ENCODE measurements at regions of chr12 and their contacts with region 1.

Region 1: GRCh38 chr12:108514973-108515814 is at the start of gene FICD:
- DNase-seq: peak; percentile 98
- ATAC-seq: peak; percentile 95
- H3K4me3 ChIP-seq: peak within 1 kb of the TSS; percentile 40 to 97 (median 93)
- H3K4me3 Mint-ChIP-seq: peak within 1 kb of the TSS; percentile 96
- H3K27ac ChIP-seq: peak within 1 kb of the TSS; percentile 58 to 81
- H3K27ac Mint-ChIP-seq: peak within 1 kb of the TSS; percentile 87
- H3K4me1 ChIP-seq: peaks cover 13 to 30% of the 10 kb centered on the region in 2 donors
- H3K4me1 Mint-ChIP-seq: peaks cover 37% of the 10 kb centered on the region
- H3K27me3 ChIP-seq: no peaks in the 10 kb centered on the region
- H3K27me3 Mint-ChIP-seq: no peaks in the 10 kb centered on the region
- CTCF ChIP-seq: no peak
- total RNA-seq, gene FICD: 9.1 and 9.7 TPM in 2 replicates

Region 2: GRCh38 chr12:107760809-107761501 is 754.2 kb before region 1 on chr12 and contains the start of gene PRDM4:
- CTCF ChIA-PET with region 1: no interaction called
- POLR2A ChIA-PET with region 1: no interaction called
- intact Hi-C with region 1: loop called (anchors 1 kb)
- DNase-seq: peak; percentile 97
- ATAC-seq: peak; percentile 92
- H3K4me3 ChIP-seq: peak within 1 kb of the TSS; percentile 82 to 87 (median 86)
- H3K4me3 Mint-ChIP-seq: peak within 1 kb of the TSS; percentile 94
- H3K27ac ChIP-seq: peak within 1 kb of the TSS; percentile 76
- H3K27ac Mint-ChIP-seq: peak within 1 kb of the TSS; percentile 94
- H3K4me1 ChIP-seq: peaks cover 24 to 29% of the 10 kb centered on the region in 2 donors
- H3K4me1 Mint-ChIP-seq: peaks cover 34% of the 10 kb centered on the region
- H3K27me3 ChIP-seq: peaks cover 0 to 3% (median 0%) of the 10 kb centered on the region in 4 experiments
- H3K27me3 Mint-ChIP-seq: no peaks in the 10 kb centered on the region
- CTCF ChIP-seq: peak; percentile 47
- total RNA-seq, gene PRDM4: 117 TPM in 2 replicates

Region 3: GRCh38 chr12:107992870-107993451 is 522.2 kb before region 1 on chr12:
- CTCF ChIA-PET with region 1: interaction called, 20 read pairs
- POLR2A ChIA-PET with region 1: no interaction called
- intact Hi-C with region 1: no loop called
- DNase-seq: peak; percentile 8
- ATAC-seq: no peak
- H3K4me3 ChIP-seq: no peak overlapping the region
- H3K4me3 Mint-ChIP-seq: no peak overlapping the region
- H3K27ac ChIP-seq: no peak overlapping the region
- H3K27ac Mint-ChIP-seq: no peak overlapping the region
- H3K4me1 ChIP-seq: no peaks in the 10 kb centered on the region
- H3K4me1 Mint-ChIP-seq: no peaks in the 10 kb centered on the region
- H3K27me3 ChIP-seq: peaks cover 0 to 3% (median 0%) of the 10 kb centered on the region in 4 experiments
- H3K27me3 Mint-ChIP-seq: peaks cover 37% of the 10 kb centered on the region
- CTCF ChIP-seq: peak; percentile 26

Region 4: GRCh38 chr12:108305520-108305919 is 209.7 kb before region 1 on chr12:
- CTCF ChIA-PET with region 1: no interaction called
- POLR2A ChIA-PET with region 1: no interaction called
- intact Hi-C with region 1: no loop called
- DNase-seq: no peak
- ATAC-seq: no peak
- H3K4me3 ChIP-seq: no peak overlapping the region
- H3K4me3 Mint-ChIP-seq: no peak overlapping the region
- H3K27ac ChIP-seq: no peak overlapping the region
- H3K27ac Mint-ChIP-seq: no peak overlapping the region
- H3K4me1 ChIP-seq: no peaks in the 10 kb centered on the region
- H3K4me1 Mint-ChIP-seq: no peaks in the 10 kb centered on the region
- H3K27me3 ChIP-seq: peaks cover 0 to 11% (median 0%) of the 10 kb centered on the region in 4 experiments
- H3K27me3 Mint-ChIP-seq: peaks cover 22% of the 10 kb centered on the region
- CTCF ChIP-seq: no peak

Region 5: GRCh38 chr12:108562348-108563135 is 47.3 kb after region 1 on chr12 and contains the start of gene ISCU:
- CTCF ChIA-PET with region 1: interaction called, 3 read pairs
- POLR2A ChIA-PET with region 1: interaction called, 4 read pairs
- intact Hi-C with region 1: loop called (anchors 1 kb)
- DNase-seq: peak; percentile 99
- ATAC-seq: peak; percentile 73
- H3K4me3 ChIP-seq: peak within 1 kb of the TSS; percentile 84 to 99 (median 98)
- H3K4me3 Mint-ChIP-seq: peak within 1 kb of the TSS; percentile 100
- H3K27ac ChIP-seq: peak within 1 kb of the TSS; percentile 94 to 97
- H3K27ac Mint-ChIP-seq: peak within 1 kb of the TSS; percentile 100
- H3K4me1 ChIP-seq: peaks cover 53 to 61% of the 10 kb centered on the region in 2 donors
- H3K4me1 Mint-ChIP-seq: peaks cover 72% of the 10 kb centered on the region
- H3K27me3 ChIP-seq: no peaks in the 10 kb centered on the region
- H3K27me3 Mint-ChIP-seq: no peaks in the 10 kb centered on the region
- CTCF ChIP-seq: no peak
- total RNA-seq, gene ISCU: 190 and 209 TPM in 2 replicates

Region 6: GRCh38 chr12:108691175-108691997 is 176.2 kb after region 1 on chr12:
- CTCF ChIA-PET with region 1: no interaction called
- POLR2A ChIA-PET with region 1: no interaction called
- intact Hi-C with region 1: no loop called
- DNase-seq: peak; percentile 34
- ATAC-seq: peak; percentile 83
- H3K4me3 ChIP-seq: peak overlapping the region in 4 of 5 experiments; percentile 4 to 38 (median 31)
- H3K4me3 Mint-ChIP-seq: peak overlapping the region; percentile 82
- H3K27ac ChIP-seq: peak overlapping the region in 1 of 2 donors; percentile 40
- H3K27ac Mint-ChIP-seq: peak overlapping the region; percentile 74
- H3K4me1 ChIP-seq: peaks cover 32 to 35% of the 10 kb centered on the region in 2 donors
- H3K4me1 Mint-ChIP-seq: peaks cover 50% of the 10 kb centered on the region
- H3K27me3 ChIP-seq: no peaks in the 10 kb centered on the region
- H3K27me3 Mint-ChIP-seq: no peaks in the 10 kb centered on the region
- CTCF ChIP-seq: no peak

Region 7: DNA sequence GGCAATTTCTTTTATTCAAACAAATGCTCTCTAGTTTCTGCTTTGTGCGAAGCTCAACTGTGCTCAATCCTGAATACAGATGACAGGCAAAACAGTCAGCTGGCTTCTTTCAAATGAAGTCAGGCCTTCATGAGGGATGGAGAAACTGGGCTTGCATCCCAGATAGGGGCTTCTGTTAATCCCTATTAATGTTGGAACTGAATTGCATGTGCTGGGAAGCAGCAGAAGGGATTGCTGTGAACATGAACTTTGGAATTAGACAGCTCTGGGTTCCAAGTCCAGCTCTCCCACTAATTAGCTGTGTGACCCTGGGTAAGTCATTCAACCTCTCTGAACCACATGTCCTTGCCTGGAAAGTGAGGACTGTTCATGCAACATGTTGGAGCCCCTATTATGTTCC is 237.2 kb after region 1 on chr12:
- CTCF ChIA-PET with region 1: no interaction called
- POLR2A ChIA-PET with region 1: no interaction called
- intact Hi-C with region 1: no loop called
- DNase-seq: no peak
- ATAC-seq: no peak
- H3K4me3 ChIP-seq: no peak overlapping the region
- H3K4me3 Mint-ChIP-seq: no peak overlapping the region
- H3K27ac ChIP-seq: no peak overlapping the region
- H3K27ac Mint-ChIP-seq: no peak overlapping the region
- H3K4me1 ChIP-seq: no peaks in the 10 kb centered on the region
- H3K4me1 Mint-ChIP-seq: no peaks in the 10 kb centered on the region
- H3K27me3 ChIP-seq: no peaks in the 10 kb centered on the region
- H3K27me3 Mint-ChIP-seq: no peaks in the 10 kb centered on the region
- CTCF ChIP-seq: no peak

Region 8: DNA sequence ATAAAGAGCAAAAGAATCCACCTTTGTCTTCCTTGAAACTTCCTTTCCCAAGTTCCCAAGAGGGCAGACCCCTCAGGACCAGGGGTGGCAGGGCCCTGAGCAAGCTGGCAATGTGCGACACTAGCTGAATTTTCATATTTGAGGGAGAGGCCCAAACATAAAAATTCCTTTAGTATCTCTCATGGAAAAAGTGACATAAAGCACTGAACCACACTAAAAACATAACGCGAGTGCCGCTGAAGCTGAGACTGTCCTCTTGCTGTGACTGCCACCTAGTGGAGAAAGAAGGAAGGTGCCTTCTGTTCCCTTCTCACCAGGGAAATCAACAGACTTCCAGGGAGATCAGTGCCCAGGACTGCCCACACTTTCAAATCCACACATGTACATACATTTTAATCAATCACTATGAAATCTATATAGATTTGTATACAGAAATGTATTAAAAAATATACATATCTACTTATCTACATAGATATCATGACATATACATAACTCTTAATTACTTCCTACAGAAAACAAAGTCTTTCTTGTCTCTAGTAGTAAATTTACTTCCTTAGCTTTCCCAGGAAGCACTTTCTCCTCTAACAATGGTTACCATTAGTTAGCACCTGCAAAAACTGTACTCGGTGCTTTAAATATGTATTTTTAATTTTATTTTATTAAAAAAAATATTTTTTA is 288.4 kb after region 1 on chr12:
- CTCF ChIA-PET with region 1: interaction called, 4 read pairs
- POLR2A ChIA-PET with region 1: no interaction called
- intact Hi-C with region 1: loop called (anchors 5 kb)
- DNase-seq: peak; percentile 84
- ATAC-seq: peak; percentile 92
- H3K4me3 ChIP-seq: no peak overlapping the region
- H3K4me3 Mint-ChIP-seq: no peak overlapping the region
- H3K27ac ChIP-seq: no peak overlapping the region
- H3K27ac Mint-ChIP-seq: peak overlapping the region; percentile 71
- H3K4me1 ChIP-seq: peaks cover 8 to 11% of the 10 kb centered on the region in 2 donors
- H3K4me1 Mint-ChIP-seq: peaks cover 19% of the 10 kb centered on the region
- H3K27me3 ChIP-seq: no peaks in the 10 kb centered on the region
- H3K27me3 Mint-ChIP-seq: no peaks in the 10 kb centered on the region
- CTCF ChIP-seq: peak; percentile 98

Region 9: GRCh38 chr12:109093022-109093918 is 578.1 kb after region 1 on chr12 and contains the start of gene ALKBH2:
- CTCF ChIA-PET with region 1: interaction called, 3 read pairs
- POLR2A ChIA-PET with region 1: no interaction called
- intact Hi-C with region 1: loop called (anchors 1 kb)
- DNase-seq: peak; percentile 96
- ATAC-seq: peak; percentile 70
- H3K4me3 ChIP-seq: peak within 1 kb of the TSS; percentile 64 to 98 (median 85)
- H3K4me3 Mint-ChIP-seq: peak within 1 kb of the TSS; percentile 95
- H3K27ac ChIP-seq: peak within 1 kb of the TSS; percentile 58 to 78
- H3K27ac Mint-ChIP-seq: peak within 1 kb of the TSS; percentile 89
- H3K4me1 ChIP-seq: peaks cover 24 to 28% of the 10 kb centered on the region in 2 donors
- H3K4me1 Mint-ChIP-seq: peaks cover 34% of the 10 kb centered on the region
- H3K27me3 ChIP-seq: no peaks in the 10 kb centered on the region
- H3K27me3 Mint-ChIP-seq: no peaks in the 10 kb centered on the region
- CTCF ChIP-seq: peak; percentile 97
- total RNA-seq, gene ALKBH2: 14.5 and 14.6 TPM in 2 replicates